Psoas muscle (tissue), 8 donors: ENCODE measurements at regions of chr14 and their contacts with region 1.

Region 1: GRCh38 chr14:62179367-62180018 is 417.3 kb downstream of the SNAPC1 start:
- DNase-seq: no peak
- ATAC-seq: peak; percentile 37 to 69 (median 50)
- H3K4me3 ChIP-seq: no peak overlapping the region
- H3K27ac ChIP-seq: no peak overlapping the region
- H3K4me1 ChIP-seq: no peaks in the 10 kb centered on the region
- H3K27me3 ChIP-seq: no peaks in the 10 kb centered on the region
- CTCF ChIP-seq: peak; percentile 32

Region 2: GRCh38 chr14:61950340-61950739 is 229.2 kb before region 1 on chr14:
- intact Hi-C with region 1: no loop called
- DNase-seq: no peak
- ATAC-seq: no peak
- H3K4me3 ChIP-seq: no peak overlapping the region
- H3K27ac ChIP-seq: no peak overlapping the region
- H3K4me1 ChIP-seq: no peaks in the 10 kb centered on the region
- H3K27me3 ChIP-seq: no peaks in the 10 kb centered on the region
- CTCF ChIP-seq: no peak

Region 3: GRCh38 chr14:62247266-62247665 is 67.8 kb after region 1 on chr14:
- intact Hi-C with region 1: no loop called
- DNase-seq: no peak
- ATAC-seq: no peak
- H3K4me3 ChIP-seq: no peak overlapping the region
- H3K27ac ChIP-seq: no peak overlapping the region
- H3K4me1 ChIP-seq: no peaks in the 10 kb centered on the region
- H3K27me3 ChIP-seq: no peaks in the 10 kb centered on the region
- CTCF ChIP-seq: no peak

Region 4: DNA sequence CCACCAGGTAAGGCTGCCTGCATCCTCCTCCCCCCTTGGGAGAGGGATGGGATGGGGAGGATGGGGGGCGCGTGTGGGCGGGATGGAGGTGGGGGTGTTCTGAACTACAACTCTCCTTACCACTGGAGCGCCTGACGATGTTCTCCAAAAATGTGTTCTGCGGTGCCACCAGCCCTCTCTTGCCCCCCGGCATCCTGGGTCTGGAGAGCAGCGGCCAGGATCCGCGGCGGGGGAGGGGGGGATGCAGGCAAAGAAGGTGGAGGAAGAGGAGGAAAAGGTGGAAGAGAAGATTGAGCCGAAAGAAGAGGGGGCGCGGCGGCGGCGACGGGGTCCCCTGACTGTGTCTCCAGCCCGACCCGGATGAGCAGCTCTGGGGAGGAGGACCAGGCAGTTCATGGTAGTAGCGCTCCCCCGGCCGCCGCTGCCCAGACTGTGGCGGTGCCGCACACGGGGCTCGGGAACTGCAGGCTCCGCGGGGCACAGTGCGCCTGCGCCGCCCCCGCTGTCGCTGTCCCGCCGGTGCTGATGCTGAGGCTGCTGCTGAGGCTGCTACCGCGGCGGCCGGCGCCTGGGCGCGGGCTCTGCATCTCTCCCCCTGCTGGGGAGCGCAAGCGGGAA is 865.6 kb after region 1 on chr14 and contains the start of gene KCNH5:
- intact Hi-C with region 1: loop called in 1 of 2 experiments (anchors 10 kb)
- DNase-seq: peak; percentile 17 to 52
- ATAC-seq: peak in 2 of 4 donors; percentile 42 to 62
- H3K4me3 ChIP-seq: peak within 1 kb of the TSS; percentile 45
- H3K27ac ChIP-seq: no peak within 1 kb of the TSS
- H3K4me1 ChIP-seq: no peaks in the 10 kb centered on the region
- H3K27me3 ChIP-seq: peaks cover 4 to 55% (median 13%) of the 10 kb centered on the region in 3 donors
- CTCF ChIP-seq: no peak
- total RNA-seq, gene KCNH5: not detected